AG04450 (cell line): ENCODE measurements at regions of chrX and their contacts with region 1.

Region 1: GRCh38 chrX:134782796-134783195 is 124.5 kb upstream of the PLAC1 start:
- DNase-seq: no peak
- H3K4me3 ChIP-seq: no peak overlapping the region
- H3K27ac ChIP-seq: no peak overlapping the region
- H3K27me3 ChIP-seq: no peaks in the 10 kb centered on the region
- CTCF ChIP-seq: peak; percentile 54

Region 2: GRCh38 chrX:134144231-134144630 is 638.6 kb before region 1 on chrX:
- CTCF ChIA-PET with region 1: no interaction called
- POLR2A ChIA-PET with region 1: no interaction called
- DNase-seq: no peak
- H3K4me3 ChIP-seq: no peak overlapping the region
- H3K27ac ChIP-seq: no peak overlapping the region
- H3K27me3 ChIP-seq: no peaks in the 10 kb centered on the region
- CTCF ChIP-seq: peak; percentile 42; the same call in 1 of the 2 replicates

Region 3: GRCh38 chrX:134191281-134191680 is 591.5 kb before region 1 on chrX:
- CTCF ChIA-PET with region 1: no interaction called
- POLR2A ChIA-PET with region 1: no interaction called
- DNase-seq: no peak
- H3K4me3 ChIP-seq: no peak overlapping the region
- H3K27ac ChIP-seq: no peak overlapping the region
- H3K27me3 ChIP-seq: no peaks in the 10 kb centered on the region
- CTCF ChIP-seq: no peak

Region 4: DNA sequence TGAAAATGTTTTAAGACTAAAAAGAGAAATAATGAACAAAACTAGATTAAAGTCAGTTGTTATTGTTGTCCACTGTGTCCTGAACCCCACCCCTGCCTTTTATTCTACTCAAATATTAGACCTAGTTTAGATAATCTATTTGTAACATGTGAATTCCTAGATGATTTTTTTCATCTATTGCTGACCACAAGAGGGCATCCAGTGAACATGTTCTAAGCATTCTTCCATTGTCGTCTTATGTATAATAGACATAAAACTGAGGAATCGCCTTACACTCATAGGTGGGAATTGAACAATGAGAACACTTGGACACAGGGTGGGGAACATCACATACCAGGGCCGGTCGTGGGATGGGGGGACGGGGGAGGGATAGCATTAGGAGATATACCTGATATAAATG is 359.2 kb before region 1 on chrX:
- CTCF ChIA-PET with region 1: interaction called, 16 read pairs
- POLR2A ChIA-PET with region 1: no interaction called
- DNase-seq: no peak
- H3K4me3 ChIP-seq: no peak overlapping the region
- H3K27ac ChIP-seq: no peak overlapping the region
- H3K27me3 ChIP-seq: no peaks in the 10 kb centered on the region
- CTCF ChIP-seq: peak; percentile 45

Region 5: GRCh38 chrX:134484039-134484438 is 298.8 kb before region 1 on chrX:
- CTCF ChIA-PET with region 1: interaction called, 51 read pairs
- POLR2A ChIA-PET with region 1: no interaction called
- DNase-seq: no peak
- H3K4me3 ChIP-seq: no peak overlapping the region
- H3K27ac ChIP-seq: no peak overlapping the region
- H3K27me3 ChIP-seq: no peaks in the 10 kb centered on the region
- CTCF ChIP-seq: peak; percentile 42

Region 6: DNA sequence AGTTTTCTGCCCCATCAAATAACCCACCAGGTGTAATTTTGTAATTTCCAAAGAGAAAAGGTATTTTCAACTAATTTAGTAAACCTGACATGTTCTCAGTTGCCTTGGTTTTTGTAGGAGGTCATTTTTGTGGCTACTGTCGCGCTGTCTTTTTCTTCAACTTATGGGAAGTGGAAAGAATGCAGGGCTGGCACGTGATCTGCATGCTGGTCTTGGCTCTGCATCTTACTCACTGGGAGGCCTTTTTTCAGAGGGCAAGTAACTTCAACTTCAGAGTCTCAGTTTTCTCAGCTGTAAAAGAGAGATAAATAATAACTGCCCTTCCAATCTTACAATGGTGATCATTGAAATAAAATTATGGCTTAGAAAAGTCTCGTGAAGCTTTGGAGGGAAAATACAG is 98.1 kb after region 1 on chrX:
- CTCF ChIA-PET with region 1: no interaction called
- POLR2A ChIA-PET with region 1: no interaction called
- DNase-seq: no peak
- H3K4me3 ChIP-seq: no peak overlapping the region
- H3K27ac ChIP-seq: no peak overlapping the region
- H3K27me3 ChIP-seq: no peaks in the 10 kb centered on the region
- CTCF ChIP-seq: no peak